Mammary epithelial cell (primary cell): ENCODE measurements at regions of chr2 and their contacts with region 1.

Region 1: GRCh38 chr2:74025971-74026612 is 41.4 kb downstream of the TET3 start:
- DNase-seq: peak; percentile 40
- H3K4me3 ChIP-seq: no peak overlapping the region
- H3K27ac ChIP-seq: no peak overlapping the region
- H3K4me1 ChIP-seq: no peaks in the 10 kb centered on the region
- H3K27me3 ChIP-seq: no peaks in the 10 kb centered on the region
- CTCF ChIP-seq: no peak

Region 2: GRCh38 chr2:73952499-73953458 is 73.3 kb before region 1 on chr2:
- CTCF ChIA-PET with region 1: no interaction called
- dilution Hi-C with region 1: no loop called
- in situ Hi-C with region 1: no loop called
- intact Hi-C with region 1: no loop called
- DNase-seq: peak; percentile 57
- H3K4me3 ChIP-seq: no peak overlapping the region
- H3K27ac ChIP-seq: no peak overlapping the region
- H3K4me1 ChIP-seq: peaks cover 7% of the 10 kb centered on the region
- H3K27me3 ChIP-seq: no peaks in the 10 kb centered on the region
- CTCF ChIP-seq: no peak

Region 3: DNA sequence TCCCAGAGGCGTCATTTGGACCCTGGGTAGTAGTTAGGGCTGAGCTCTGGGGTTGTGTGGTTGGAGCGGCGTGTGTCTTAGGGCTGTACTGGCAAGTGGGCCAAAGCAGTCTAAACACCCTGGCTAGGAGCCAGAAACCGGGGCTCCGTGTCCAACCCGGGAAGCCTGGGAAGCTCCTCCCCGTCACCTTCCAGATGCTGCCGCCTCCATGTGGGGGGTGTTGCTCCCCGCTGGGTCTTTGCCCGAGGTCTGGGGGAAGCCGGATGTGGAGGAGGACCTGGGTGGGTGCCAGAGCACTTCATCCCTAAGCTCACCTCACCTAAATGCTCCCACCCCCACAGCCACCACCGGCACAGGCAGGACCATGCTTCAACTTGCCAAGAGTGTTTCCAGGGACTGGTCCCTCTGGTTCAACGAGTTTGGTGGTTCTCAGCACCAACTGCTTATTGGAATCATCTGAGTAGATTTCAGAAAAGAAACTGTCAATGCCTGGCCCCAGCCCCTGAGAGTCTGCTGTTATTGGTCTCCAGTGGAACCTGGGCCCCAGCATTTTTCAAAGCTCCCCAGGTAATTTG is 15.9 kb before region 1 on chr2:
- CTCF ChIA-PET with region 1: no interaction called
- dilution Hi-C with region 1: no loop called
- in situ Hi-C with region 1: no loop called
- intact Hi-C with region 1: loop called (anchors 2 kb)
- DNase-seq: peak; percentile 94
- H3K4me3 ChIP-seq: peak overlapping the region in 1 of 3 experiments; percentile 31
- H3K27ac ChIP-seq: peak overlapping the region; percentile 43
- H3K4me1 ChIP-seq: peaks cover 33% of the 10 kb centered on the region
- H3K27me3 ChIP-seq: no peaks in the 10 kb centered on the region
- CTCF ChIP-seq: no peak

Region 4: DNA sequence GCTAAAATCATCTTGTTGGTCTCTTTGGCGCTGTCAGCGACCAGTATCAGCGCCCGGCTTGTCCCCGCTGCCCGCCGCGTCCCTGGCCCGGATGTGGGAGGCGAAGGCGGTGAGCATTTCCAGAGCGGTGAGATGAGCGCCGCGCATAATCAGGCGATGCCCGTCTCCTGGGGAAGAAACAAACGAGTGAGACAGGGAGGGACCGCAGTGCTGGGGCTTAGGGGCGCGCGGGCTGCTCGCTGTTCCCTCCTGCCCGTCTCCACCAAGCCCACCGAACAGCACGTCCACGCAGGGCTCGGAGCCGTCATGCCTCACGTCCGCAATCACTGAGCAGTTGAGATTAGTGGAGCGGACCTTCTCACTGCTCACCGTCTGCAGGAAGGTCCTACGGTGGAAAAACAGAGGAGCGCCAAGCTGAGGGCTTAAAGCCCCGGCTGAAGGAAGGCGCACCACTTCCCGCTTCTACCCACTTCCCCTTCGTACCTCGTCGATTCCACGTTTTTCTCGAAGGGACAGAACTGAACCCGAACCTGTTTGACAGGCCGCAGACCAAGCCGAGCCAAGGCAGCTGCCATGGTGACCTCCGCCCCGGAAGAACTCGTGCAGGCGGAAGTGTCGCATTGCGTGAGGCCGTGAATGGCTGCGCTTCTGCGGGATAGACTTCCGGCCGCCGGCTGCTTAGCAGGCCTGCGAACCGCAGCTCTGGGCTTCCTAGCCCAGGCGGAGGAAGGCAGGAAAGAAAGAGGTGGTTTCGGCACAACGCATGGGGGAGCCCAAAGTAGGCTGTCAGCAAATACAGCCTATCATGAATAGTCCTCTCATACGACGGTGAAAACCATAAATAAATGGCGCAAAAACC is 446.2 kb after region 1 on chr2 and contains the start of gene MRPL53:
- CTCF ChIA-PET with region 1: no interaction called
- dilution Hi-C with region 1: no loop called
- in situ Hi-C with region 1: no loop called
- intact Hi-C with region 1: no loop called
- DNase-seq: peak; percentile 89
- H3K4me3 ChIP-seq: peak within 1 kb of the TSS; percentile 52 to 79 (median 67)
- H3K27ac ChIP-seq: peak within 1 kb of the TSS; percentile 85
- H3K4me1 ChIP-seq: peaks cover 14% of the 10 kb centered on the region
- H3K27me3 ChIP-seq: no peaks in the 10 kb centered on the region
- CTCF ChIP-seq: no peak
- total RNA-seq, gene MRPL53: 9.3 to 70.1 TPM